ENCODE measurements at regions of chr1 and their contacts with region 1.

Region 1: GRCh38 chr1:91673613-91674012 is 173.0 kb downstream of the CDC7 start:
- DNase-seq: no peak
- H3K4me3 Mint-ChIP-seq: no peak overlapping the region
- H3K27ac Mint-ChIP-seq: peak overlapping the region; percentile 50
- H3K4me1 Mint-ChIP-seq: peaks cover 39% of the 10 kb centered on the region
- H3K27me3 Mint-ChIP-seq: no peaks in the 10 kb centered on the region

Region 2: DNA sequence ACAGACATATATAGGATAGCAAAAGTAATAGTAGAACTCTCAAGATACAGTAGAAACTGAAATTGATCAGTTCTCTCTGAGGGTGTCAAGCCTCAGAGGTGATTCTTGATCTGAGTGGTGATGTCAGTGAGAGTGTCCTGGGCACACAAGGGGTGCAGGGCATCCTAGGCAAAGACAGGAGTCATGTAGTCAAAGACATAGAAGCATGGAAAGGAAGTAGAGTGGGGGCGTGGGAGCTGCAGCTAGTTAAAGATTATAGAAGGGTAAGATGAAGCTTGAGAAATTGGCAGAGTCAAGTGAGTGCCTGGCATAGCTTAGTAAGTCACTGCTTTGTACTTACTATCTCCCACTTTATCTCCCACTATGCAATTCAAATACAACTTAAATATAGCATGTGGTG is 150.1 kb before region 1 on chr1:
- intact Hi-C with region 1: loop called (anchors 1 kb)
- DNase-seq: no peak
- H3K4me3 Mint-ChIP-seq: no peak overlapping the region
- H3K27ac Mint-ChIP-seq: peak overlapping the region; percentile 33
- H3K4me1 Mint-ChIP-seq: peaks cover 41% of the 10 kb centered on the region
- H3K27me3 Mint-ChIP-seq: no peaks in the 10 kb centered on the region

Region 3: GRCh38 chr1:91548376-91549040 is 125.1 kb before region 1 on chr1:
- intact Hi-C with region 1: loop called (anchors 2 kb)
- DNase-seq: no peak
- H3K4me3 Mint-ChIP-seq: peak overlapping the region; percentile 61
- H3K27ac Mint-ChIP-seq: peak overlapping the region; percentile 82
- H3K4me1 Mint-ChIP-seq: peaks cover 74% of the 10 kb centered on the region
- H3K27me3 Mint-ChIP-seq: no peaks in the 10 kb centered on the region

Region 4: GRCh38 chr1:91611498-91611917 is 62.1 kb before region 1 on chr1:
- intact Hi-C with region 1: no loop called
- DNase-seq: no peak
- H3K4me3 Mint-ChIP-seq: no peak overlapping the region
- H3K27ac Mint-ChIP-seq: no peak overlapping the region
- H3K4me1 Mint-ChIP-seq: peaks cover 12% of the 10 kb centered on the region
- H3K27me3 Mint-ChIP-seq: no peaks in the 10 kb centered on the region

Region 5: DNA sequence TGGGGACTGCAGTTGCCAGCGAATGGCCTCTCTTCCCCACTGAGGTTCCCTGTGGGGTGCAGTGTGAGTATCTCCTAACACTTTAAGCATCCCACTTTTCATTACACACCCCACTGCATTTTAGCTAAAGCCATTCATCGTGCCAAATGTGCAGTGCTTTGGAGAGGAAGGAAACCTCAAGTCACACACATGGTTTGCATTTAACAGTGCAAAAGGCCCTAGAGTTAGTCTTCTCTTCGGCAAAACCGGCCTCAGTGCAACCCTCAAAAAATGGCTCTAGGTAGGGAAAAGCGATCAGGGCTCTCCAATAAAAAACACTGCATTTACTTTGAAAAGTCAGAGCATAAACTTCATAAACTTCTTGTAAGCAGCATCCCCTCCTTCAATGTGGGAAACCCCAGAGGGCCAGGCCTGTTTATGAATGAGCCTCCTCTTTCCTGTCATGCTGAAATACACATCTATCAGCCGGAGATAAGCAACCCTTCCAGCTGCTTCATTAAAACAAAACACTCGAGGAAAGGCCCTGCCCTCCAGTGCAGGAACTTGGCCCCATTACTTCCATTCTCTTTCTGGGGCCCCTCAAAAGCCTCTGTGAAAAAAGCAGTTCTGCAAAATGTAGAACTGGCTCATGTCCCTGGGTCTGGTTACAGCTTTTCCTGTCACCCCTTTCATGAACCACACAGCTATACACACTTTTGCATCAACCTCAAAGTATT is 11.0 kb after region 1 on chr1:
- intact Hi-C with region 1: loop called (anchors 1 kb)
- DNase-seq: peak; percentile 28
- H3K4me3 Mint-ChIP-seq: peak overlapping the region; percentile 25
- H3K27ac Mint-ChIP-seq: peak overlapping the region; percentile 93
- H3K4me1 Mint-ChIP-seq: peaks cover 76% of the 10 kb centered on the region
- H3K27me3 Mint-ChIP-seq: no peaks in the 10 kb centered on the region

Region 6: DNA sequence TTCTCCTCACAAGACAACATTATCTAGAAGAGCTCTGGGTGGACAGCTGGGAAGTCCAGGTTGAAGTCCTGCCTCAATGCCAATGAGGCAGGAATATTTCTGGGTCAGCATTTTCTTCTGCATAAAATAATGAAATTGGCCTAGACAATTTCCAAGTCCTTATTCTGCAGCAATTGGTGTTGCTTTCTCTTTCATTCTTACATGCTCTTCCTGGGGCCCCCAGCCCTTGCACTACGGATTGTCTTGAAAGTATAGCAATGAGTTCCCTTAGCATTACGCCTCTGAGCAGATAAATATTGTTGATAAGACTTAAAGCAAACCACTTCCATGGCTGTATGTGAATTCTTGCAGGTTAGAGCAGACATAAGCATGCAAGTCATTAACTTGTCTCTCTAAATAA is 23.8 kb after region 1 on chr1:
- intact Hi-C with region 1: loop called (anchors 1 kb)
- DNase-seq: peak; percentile 69
- H3K4me3 Mint-ChIP-seq: peak overlapping the region; percentile 72
- H3K27ac Mint-ChIP-seq: peak overlapping the region; percentile 86
- H3K4me1 Mint-ChIP-seq: peaks cover 41% of the 10 kb centered on the region
- H3K27me3 Mint-ChIP-seq: peaks cover 1% of the 10 kb centered on the region

Region 7: DNA sequence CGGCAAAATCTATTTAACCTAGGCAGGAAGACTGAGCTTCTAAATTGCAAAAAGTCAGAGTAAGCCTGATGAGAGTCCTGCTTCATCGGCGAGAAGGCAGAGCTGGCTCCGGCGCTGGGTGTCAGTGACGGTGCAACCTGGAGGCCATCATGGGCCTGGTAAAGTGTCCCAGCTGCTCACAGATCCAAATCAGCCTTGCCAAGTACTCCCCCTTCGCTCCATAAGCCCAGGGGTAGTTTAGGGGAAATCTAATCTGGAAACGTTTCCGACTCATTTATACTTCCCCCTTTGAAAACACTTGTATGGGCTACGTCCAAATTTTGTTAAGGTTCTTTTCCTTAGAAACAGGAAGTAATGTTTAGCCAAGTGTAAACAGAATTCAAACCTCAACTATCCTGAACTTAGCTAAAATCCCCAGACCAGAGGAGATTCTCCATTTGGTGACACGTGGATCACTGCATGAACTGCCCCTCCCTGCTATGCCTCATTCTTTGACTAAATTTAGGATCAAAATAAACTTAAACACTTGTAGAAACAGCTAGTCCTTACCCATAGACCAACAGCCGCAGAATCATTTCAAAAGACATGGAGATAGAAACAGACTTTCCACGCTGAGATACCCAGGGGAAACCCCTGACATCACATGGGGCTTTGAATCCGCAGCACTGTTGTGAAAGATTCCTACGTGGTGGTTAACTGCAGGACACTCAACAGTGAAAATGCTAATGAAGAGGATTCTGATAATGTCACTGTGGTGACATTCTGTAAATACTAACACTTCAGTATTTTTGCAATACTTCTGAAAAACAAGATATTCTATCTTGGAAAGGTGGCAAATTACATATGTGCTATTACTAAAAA is 39.6 kb after region 1 on chr1:
- intact Hi-C with region 1: loop called (anchors 1 kb)
- DNase-seq: peak; percentile 52
- H3K4me3 Mint-ChIP-seq: peak overlapping the region; percentile 61
- H3K27ac Mint-ChIP-seq: peak overlapping the region; percentile 94
- H3K4me1 Mint-ChIP-seq: peaks cover 59% of the 10 kb centered on the region
- H3K27me3 Mint-ChIP-seq: peaks cover 4% of the 10 kb centered on the region

Region 8: DNA sequence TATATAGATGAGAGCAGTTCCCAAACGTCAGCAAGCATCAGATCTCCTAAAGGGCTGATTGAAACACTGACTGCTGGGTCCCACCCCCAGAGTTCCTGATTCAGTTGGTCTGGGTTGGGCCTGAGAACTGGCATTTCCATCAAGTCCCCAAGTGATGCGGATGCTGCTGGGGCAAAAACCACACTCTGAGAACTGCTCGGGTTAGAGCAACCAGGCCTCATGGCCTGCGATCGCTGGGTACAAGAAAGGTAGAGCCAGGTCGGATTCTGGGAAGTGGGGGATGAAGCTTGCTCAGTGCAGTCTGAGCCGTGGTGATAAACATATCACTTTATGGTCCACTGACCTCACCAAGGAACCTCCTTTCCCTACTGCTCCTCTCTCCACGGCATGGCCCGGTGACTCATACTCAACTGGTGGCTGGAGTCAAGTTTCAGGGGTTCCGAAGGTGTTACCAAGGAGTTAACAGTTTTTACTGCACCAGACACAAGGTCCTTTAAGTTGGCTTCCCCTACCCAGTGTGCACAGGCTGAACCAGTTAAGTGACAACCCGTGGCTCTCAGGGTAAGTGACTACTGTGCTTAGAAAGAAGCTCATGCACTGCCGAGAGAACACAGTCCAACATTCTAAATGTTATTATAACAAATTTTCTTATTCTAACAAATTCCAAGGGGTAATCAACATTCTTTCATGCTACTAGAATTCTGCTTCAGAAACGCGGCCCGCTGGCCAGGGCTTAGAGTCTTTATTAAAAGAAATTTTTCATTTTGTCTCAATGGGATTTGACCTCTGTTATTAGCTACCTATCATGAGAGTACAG is 58.9 kb after region 1 on chr1:
- intact Hi-C with region 1: loop called (anchors 2 kb)
- DNase-seq: no peak
- H3K4me3 Mint-ChIP-seq: no peak overlapping the region
- H3K27ac Mint-ChIP-seq: peak overlapping the region; percentile 37
- H3K4me1 Mint-ChIP-seq: peaks cover 51% of the 10 kb centered on the region
- H3K27me3 Mint-ChIP-seq: peaks cover 8% of the 10 kb centered on the region

Measured in activated T-helper 1 cell treated with anti-CD3 and anti-CD28 coated beads, Interleukin-12 subunit alpha, Interleukin-12 subunit beta, Interleukin-2, Interleukin-4 antibody, amounts not matched to agents 30 ng/mL and 10 ng/mL and 1 ng/mL, durations not matched to agents 14 hours and 24 hours and 36 hours (primary cell).